Activated naive CD4-positive, alpha-beta T cell treated with anti-CD3 and anti-CD28 coated beads for 36 hours (primary cell): ENCODE measurements at regions of chr2 and their contacts with region 1.

Region 1: GRCh38 chr2:120343433-120344105 is 2.4 kb upstream of the INHBB start:
- DNase-seq: peak; percentile 79
- H3K4me3 Mint-ChIP-seq: peak overlapping the region; percentile 32
- H3K27ac Mint-ChIP-seq: no peak overlapping the region
- H3K4me1 Mint-ChIP-seq: peaks cover 13% of the 10 kb centered on the region
- H3K27me3 Mint-ChIP-seq: peaks cover 50% of the 10 kb centered on the region

Region 2: DNA sequence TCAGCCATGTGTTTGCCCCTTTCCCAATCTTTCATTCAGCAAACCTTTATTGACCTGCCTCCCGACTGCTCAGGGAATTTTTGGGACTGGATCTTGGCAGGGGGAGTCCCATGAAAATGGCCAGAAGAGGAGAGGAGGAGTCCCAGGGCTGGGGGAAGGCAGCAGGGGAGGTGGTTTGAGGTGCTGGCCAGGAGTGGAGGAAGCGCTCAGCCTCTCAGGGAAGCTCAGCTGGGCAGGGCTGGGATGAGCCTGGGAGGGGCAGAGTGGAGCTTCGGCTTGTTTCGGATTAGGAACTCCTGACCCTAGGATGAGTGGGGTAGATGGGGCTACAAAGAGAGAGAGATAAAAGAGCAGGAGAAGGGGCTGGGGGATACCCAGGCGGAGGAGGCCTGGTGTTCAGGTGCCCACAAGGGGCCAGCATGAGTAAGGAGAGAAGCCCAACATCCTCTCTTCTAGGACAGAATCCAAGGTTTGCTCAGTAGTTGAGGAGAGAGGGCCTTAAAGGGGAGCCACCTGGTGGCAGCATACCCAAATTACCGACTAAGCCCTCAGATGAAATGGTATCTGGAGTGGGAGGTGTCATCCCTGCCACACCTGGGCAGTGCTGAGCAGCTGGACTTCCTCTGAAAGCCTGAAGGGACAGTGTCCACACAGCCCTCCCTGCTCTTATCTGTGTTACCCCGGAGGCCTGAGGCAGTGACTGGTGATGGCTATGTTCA is 93.5 kb after region 1 on chr2:
- CTCF ChIA-PET with region 1: interaction called, 11 read pairs
- intact Hi-C with region 1: loop called (anchors 1 kb)
- DNase-seq: peak; percentile 50
- H3K4me3 Mint-ChIP-seq: no peak overlapping the region
- H3K27ac Mint-ChIP-seq: no peak overlapping the region
- H3K4me1 Mint-ChIP-seq: peaks cover 4% of the 10 kb centered on the region
- H3K27me3 Mint-ChIP-seq: peaks cover 10% of the 10 kb centered on the region

Region 3: DNA sequence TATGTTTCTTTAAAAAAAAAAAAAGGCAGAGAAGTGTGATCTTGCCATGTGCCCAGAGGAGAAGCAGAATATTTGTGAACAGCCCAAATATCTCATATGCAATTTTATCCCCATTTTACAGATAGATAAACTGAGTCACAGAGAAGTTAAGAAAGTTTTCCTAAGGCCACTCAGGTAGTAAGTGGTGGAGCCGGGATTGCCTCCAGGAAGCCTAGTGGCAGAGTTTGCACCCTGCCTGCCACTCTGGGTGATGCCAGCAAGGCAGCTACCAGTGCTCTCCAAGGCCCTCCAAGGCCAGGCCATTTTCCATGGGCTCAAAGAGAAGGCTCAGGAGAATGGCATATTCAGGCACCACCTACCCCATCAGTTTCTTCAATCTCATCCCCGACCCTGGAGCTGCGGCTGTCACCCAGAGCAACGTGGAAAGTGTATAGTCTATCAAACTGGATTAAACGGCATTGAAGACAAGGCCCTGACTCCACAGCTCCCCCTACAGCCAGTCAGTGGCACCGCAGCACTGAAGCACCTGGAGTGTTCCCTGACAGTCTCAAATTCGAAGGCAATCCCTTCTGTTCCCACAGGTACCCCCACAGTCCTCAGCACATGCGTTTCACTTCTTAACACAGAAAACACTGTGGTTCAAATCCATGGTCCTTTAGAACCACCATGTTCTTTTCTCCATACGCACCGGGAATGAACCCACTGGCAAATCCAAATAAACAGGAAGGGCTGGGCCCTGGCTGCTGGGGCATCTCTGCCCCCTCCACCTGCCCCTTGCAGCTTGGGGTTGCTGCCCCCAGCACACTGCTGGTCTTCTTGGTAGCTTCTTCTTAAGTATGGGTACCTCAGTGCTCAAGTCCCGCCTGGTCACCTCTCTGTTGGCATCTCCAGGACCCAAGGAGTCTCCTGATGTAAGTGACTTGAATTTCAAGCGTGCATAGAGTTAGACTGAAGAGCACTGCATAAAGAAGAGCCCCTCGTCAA is 177.7 kb after region 1 on chr2:
- CTCF ChIA-PET with region 1: interaction called, 3 read pairs
- intact Hi-C with region 1: loop called (anchors 2 kb)
- DNase-seq: peak; percentile 61
- H3K4me3 Mint-ChIP-seq: no peak overlapping the region
- H3K27ac Mint-ChIP-seq: no peak overlapping the region
- H3K4me1 Mint-ChIP-seq: no peaks in the 10 kb centered on the region
- H3K27me3 Mint-ChIP-seq: peaks cover 38% of the 10 kb centered on the region

Region 4: GRCh38 chr2:120552800-120553481 is 209.4 kb after region 1 on chr2:
- CTCF ChIA-PET with region 1: interaction called, 4 read pairs
- intact Hi-C with region 1: loop called (anchors 1 kb)
- DNase-seq: peak; percentile 63
- H3K4me3 Mint-ChIP-seq: no peak overlapping the region
- H3K27ac Mint-ChIP-seq: no peak overlapping the region
- H3K4me1 Mint-ChIP-seq: peaks cover 3% of the 10 kb centered on the region
- H3K27me3 Mint-ChIP-seq: peaks cover 32% of the 10 kb centered on the region

Region 5: DNA sequence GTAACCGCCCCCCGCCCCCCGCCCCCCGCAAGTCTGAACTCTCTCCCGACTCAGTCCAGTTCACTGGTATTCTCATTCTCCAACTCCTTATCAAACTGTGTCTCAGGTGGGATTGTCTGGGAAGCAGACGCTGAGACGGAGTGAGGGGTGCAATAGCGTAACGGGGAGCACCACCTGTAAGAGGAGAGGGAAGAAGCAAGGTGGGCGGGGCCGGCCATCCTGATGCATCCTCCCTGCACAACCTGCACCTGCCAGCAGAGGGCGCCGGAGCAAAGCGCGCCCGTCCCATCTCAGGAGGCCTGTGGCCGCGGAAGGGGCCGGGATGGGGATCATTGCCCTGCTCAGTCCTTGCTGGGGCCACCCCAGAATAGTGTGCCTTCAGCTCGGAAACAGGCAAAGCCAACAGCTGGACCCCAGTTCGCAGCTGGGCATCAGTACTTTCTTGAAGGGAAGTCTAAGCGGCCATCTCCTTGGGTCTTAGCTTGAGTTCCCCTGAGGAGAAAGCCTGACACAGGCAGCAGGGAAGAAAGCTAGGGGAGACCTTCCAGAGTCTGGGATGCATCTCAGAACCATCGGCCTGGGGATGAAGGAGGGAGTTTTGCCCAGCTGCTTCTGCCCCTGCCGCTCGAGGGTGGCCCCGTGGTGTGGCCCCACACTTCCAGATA is 733.4 kb after region 1 on chr2:
- CTCF ChIA-PET with region 1: no interaction called
- intact Hi-C with region 1: loop called (anchors 2 kb)
- DNase-seq: peak; percentile 79
- H3K4me3 Mint-ChIP-seq: no peak overlapping the region
- H3K27ac Mint-ChIP-seq: no peak overlapping the region
- H3K4me1 Mint-ChIP-seq: no peaks in the 10 kb centered on the region
- H3K27me3 Mint-ChIP-seq: peaks cover 17% of the 10 kb centered on the region